Spleen (tissue), 13 donors: ENCODE measurements at regions of chr7 and their contacts with region 1.

Region 1: DNA sequence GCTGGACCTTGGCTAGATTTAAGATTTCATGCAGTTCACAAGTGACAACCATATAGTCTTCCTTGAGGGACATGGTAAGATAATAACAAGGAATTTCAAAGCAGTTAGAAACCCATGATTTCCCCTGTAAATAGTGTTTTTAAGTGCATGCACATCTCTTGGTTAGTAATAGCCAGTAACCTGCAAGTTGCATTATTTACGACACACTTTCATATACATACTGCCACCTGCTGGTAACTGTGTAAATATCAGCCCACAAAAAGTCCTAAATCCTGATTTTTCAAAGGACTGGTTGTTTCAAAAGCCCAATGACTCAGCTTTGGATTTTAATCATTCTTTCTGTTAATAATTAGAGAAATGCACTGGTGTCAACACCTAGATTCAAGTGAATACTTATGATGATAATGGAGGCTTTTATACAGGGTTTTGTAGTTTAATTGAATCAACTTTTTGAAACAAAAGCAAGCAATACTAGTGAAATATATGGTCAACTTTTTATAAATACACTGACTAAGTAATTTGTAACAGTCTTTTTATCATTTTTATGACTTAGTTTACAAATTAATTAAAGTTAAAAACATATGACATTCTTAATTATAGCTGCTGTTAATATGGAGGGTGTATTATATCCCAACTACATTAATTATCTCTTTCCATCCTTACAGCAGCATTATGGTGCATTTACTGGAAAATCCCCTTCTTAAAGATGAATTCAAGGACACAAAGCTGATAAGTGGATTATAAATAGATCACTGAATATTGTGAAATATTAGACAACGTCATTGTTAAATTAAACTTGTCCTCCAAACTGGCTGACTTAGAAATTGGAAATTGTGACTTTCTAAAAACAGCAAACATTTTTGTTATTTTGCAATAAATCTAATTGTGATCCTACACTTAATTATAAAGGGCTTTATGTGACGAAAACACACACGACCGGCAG is 367.7 kb upstream of the SEMA3D start:
- DNase-seq: no peak
- H3K4me3 ChIP-seq: no peak overlapping the region
- H3K27ac ChIP-seq: no peak overlapping the region
- H3K4me1 ChIP-seq: peaks cover 0 to 3% (median 0%) of the 10 kb centered on the region in 6 donors
- H3K27me3 ChIP-seq: no peaks in the 10 kb centered on the region
- CTCF ChIP-seq: peak; percentile 16 to 77 (median 66)
- POLR2A ChIP-seq: no peak

Region 2: DNA sequence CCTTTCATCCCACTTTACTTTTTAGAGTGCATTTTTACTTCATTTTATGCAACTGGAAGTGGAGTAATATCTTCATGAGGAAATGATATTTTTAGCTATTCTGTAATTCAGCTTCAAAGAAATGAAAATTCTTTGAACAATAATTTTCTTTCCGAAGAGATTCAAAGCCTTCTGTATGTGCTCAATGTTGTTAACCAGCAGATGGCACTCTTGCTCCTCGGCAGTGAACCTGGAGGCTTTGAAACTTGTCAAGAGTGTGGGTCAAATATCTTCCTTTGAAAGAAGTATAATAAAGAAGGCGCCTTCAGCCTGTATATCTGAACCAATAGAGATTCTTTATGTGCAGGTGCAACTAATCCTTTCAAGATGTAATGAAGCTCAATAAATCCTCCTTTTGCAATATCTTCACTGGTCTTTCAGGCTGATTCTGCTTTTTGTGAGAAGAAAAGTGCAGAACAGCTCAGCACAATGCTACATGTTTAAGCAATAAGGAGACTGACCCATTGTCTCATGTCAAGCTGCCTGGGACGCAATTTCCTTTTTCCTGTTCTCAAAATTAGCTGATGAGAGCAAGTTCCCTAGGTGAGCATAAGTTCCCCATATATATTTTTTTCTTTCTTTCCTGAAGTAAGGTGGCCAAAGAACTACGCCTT is 1618.3 kb before region 1 on chr7:
- intact Hi-C with region 1: loop called (anchors 10 kb)
- DNase-seq: no peak
- H3K4me3 ChIP-seq: no peak overlapping the region
- H3K27ac ChIP-seq: peak overlapping the region in 4 of 8 donors; percentile 1 to 43 (median 33)
- H3K4me1 ChIP-seq: peaks cover 0 to 13% (median 2%) of the 10 kb centered on the region in 6 donors
- H3K27me3 ChIP-seq: no peaks in the 10 kb centered on the region
- CTCF ChIP-seq: peak; percentile 29 to 72 (median 60)
- POLR2A ChIP-seq: no peak

Region 3: DNA sequence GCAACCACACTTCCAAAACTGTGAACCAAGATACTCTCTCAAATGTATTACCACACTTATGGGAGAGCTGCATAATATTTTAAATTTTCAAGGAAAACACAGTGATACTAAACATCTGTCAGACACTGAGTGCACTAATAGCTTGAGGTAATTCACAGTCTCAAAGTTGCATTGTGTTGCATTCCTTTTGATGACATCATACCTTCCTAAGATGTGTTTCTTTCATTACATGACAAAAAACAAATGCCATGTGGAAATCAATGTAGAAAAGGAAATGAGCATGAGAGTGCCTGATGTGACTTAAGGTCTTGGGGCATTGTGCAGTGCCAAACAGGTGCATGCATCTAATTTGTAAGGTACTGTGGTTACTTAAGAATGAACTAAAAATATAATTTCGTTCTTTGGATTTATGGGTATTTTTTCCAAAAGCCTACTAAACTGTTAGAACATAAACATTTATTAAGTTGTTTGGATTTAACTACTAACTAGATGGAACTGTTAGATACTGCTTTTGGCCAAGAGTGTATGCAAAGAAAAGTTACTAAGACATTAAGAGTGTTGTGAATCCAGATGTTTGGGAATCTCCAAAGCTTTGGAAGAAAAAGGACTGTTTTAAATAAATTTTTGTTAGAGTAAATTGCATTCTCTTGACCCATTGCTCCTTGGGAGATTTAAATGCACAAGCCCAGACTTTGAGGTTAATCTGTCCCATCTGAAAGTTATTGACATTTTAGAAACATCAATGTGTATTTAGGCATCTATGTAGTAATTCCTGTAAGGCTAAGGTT is 128.5 kb after region 1 on chr7:
- intact Hi-C with region 1: no loop called
- DNase-seq: no peak
- H3K4me3 ChIP-seq: no peak overlapping the region
- H3K27ac ChIP-seq: no peak overlapping the region
- H3K4me1 ChIP-seq: no peaks in the 10 kb centered on the region
- H3K27me3 ChIP-seq: no peaks in the 10 kb centered on the region
- CTCF ChIP-seq: no peak
- POLR2A ChIP-seq: no peak